Activated CD8-positive, alpha-beta memory T cell treated with anti-CD3 and anti-CD28 coated beads, Interleukin-2, amount 10 ng/mL, durations not matched to agents 7 days and 5 days (primary cell): ENCODE measurements at regions of chr6 and their contacts with region 1.

Region 1: GRCh38 chr6:16700202-16700915 is 60.9 kb downstream of the ATXN1 start:
- DNase-seq: peak; percentile 78
- ATAC-seq: peak; percentile 32
- H3K4me3 Mint-ChIP-seq: peak overlapping the region; percentile 81
- H3K27ac Mint-ChIP-seq: peak overlapping the region; percentile 99
- H3K4me1 Mint-ChIP-seq: peaks cover 84% of the 10 kb centered on the region
- H3K27me3 Mint-ChIP-seq: no peaks in the 10 kb centered on the region

Region 2: DNA sequence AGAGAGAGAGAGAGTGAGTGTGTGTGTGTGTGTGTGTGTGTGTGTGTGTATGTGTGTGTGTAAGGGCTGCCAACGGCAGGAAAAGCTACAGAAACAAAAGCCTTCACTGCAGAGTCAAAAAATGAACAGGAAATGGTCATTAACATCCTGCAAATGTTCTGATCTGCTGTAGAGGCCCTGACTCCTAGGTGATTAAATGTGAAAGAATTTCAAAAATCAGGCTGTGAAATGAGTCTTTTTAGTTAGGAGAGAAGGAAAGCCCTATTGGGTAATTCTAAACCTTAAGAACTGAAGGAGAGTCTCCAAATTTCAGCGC is 738.0 kb before region 1 on chr6:
- CTCF ChIA-PET with region 1: no interaction called
- DNase-seq: peak; percentile 65
- ATAC-seq: peak; percentile 82
- H3K4me3 Mint-ChIP-seq: no peak overlapping the region
- H3K27ac Mint-ChIP-seq: peak overlapping the region; percentile 75
- H3K4me1 Mint-ChIP-seq: peaks cover 28% of the 10 kb centered on the region
- H3K27me3 Mint-ChIP-seq: peaks cover 2% of the 10 kb centered on the region

Region 3: DNA sequence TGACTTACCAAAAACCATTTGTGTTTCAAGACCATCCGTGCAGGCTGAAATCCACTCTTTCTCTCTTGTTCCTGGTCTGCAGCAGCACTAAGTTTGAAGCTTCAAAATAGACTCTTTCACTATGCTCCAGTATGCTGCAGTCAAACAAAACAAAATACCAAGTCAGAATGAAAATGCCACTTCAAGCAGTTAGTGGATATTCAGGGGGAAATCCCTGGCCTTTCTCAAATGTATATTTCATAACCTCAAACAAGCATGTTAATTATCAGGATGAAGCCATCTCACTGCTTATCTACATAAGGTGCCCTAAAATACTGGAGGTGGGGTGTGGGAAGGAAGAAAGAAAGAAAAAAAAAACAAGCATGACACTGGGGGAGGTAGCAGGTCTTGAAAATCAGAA is 42.6 kb before region 1 on chr6:
- CTCF ChIA-PET with region 1: interaction called, 11 read pairs
- DNase-seq: no peak
- ATAC-seq: peak; percentile 47
- H3K4me3 Mint-ChIP-seq: peak overlapping the region; percentile 53
- H3K27ac Mint-ChIP-seq: peak overlapping the region; percentile 85
- H3K4me1 Mint-ChIP-seq: peaks cover 70% of the 10 kb centered on the region
- H3K27me3 Mint-ChIP-seq: no peaks in the 10 kb centered on the region

Region 4: GRCh38 chr6:16712931-16713484 is 12.6 kb after region 1 on chr6:
- CTCF ChIA-PET with region 1: interaction called, 15 read pairs
- DNase-seq: peak; percentile 59
- ATAC-seq: peak; percentile 47
- H3K4me3 Mint-ChIP-seq: peak overlapping the region; percentile 74
- H3K27ac Mint-ChIP-seq: peak overlapping the region; percentile 91
- H3K4me1 Mint-ChIP-seq: peaks cover 58% of the 10 kb centered on the region
- H3K27me3 Mint-ChIP-seq: no peaks in the 10 kb centered on the region

Region 5: DNA sequence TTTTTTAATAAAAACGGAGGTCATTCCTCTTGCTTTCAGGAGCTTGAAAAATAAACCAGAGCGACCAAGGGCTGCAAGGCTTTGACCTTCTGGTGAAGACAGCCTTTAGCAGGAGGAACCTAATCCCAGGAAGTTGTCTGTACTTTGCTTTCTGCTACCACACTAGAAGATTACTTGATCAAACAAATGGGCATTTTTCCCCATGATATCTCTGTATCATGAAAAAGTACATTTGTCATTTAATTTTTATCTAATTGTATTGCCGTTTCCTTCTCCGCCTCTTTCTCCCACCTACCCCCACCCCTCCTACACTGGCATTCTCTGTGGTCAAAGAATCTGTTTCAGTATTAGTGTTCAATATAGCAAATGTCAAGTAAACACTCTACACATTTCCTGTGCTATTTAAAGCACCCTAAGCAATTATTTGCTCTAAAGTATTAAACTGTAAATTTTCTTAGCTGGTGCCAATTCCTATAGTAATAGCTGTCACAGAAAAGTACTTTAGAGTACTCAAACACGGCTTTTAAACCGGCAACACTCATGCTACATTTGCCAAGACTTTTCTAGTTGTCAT is 31.2 kb after region 1 on chr6:
- CTCF ChIA-PET with region 1: interaction called, 12 read pairs
- DNase-seq: peak; percentile 76
- ATAC-seq: peak; percentile 85
- H3K4me3 Mint-ChIP-seq: peak overlapping the region; percentile 74
- H3K27ac Mint-ChIP-seq: peak overlapping the region; percentile 94
- H3K4me1 Mint-ChIP-seq: peaks cover 70% of the 10 kb centered on the region
- H3K27me3 Mint-ChIP-seq: no peaks in the 10 kb centered on the region